CD4-positive, alpha-beta memory T cell (primary cell): ENCODE measurements at regions of chr2 and their contacts with region 1.

Region 1: DNA sequence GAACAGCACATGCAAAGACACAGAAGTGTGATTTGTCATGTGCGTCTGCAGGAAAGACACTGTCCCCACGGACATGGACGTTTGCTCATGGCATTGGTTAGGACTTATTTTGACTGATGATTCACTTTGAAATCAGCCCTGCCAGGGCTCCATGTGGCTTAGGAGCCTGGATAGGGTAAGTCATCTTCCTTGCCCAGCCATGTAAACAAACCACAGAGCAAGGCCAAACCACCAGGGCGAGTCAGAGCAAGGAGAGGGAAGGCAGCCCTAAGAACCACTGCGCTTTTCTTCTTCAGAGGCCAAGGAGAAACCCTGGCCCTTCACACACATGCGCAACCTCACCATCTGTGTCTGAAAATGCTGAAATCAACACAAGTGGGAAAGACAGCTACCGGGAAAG is 88.8 kb downstream of the GFPT1 start:
- DNase-seq: no peak
- H3K4me3 ChIP-seq: no peak overlapping the region
- H3K4me3 Mint-ChIP-seq: no peak overlapping the region
- H3K27ac ChIP-seq: no peak overlapping the region
- H3K27ac Mint-ChIP-seq: no peak overlapping the region
- H3K4me1 ChIP-seq: no peaks in the 10 kb centered on the region
- H3K4me1 Mint-ChIP-seq: no peaks in the 10 kb centered on the region
- H3K27me3 ChIP-seq: no peaks in the 10 kb centered on the region
- H3K27me3 Mint-ChIP-seq: peaks cover 5 to 16% of the 10 kb centered on the region in 2 donors

Region 2: GRCh38 chr2:68027959-68028358 is 1270.3 kb before region 1 on chr2:
- CTCF ChIA-PET with region 1: no interaction called
- POLR2A ChIA-PET with region 1: no interaction called
- intact Hi-C with region 1: loop called (anchors 10 kb)
- DNase-seq: no peak
- H3K4me3 ChIP-seq: no peak overlapping the region
- H3K4me3 Mint-ChIP-seq: no peak overlapping the region
- H3K27ac ChIP-seq: no peak overlapping the region
- H3K27ac Mint-ChIP-seq: no peak overlapping the region
- H3K4me1 ChIP-seq: no peaks in the 10 kb centered on the region
- H3K4me1 Mint-ChIP-seq: no peaks in the 10 kb centered on the region
- H3K27me3 ChIP-seq: no peaks in the 10 kb centered on the region
- H3K27me3 Mint-ChIP-seq: peaks cover 0 to 6% of the 10 kb centered on the region in 2 donors

Region 3: DNA sequence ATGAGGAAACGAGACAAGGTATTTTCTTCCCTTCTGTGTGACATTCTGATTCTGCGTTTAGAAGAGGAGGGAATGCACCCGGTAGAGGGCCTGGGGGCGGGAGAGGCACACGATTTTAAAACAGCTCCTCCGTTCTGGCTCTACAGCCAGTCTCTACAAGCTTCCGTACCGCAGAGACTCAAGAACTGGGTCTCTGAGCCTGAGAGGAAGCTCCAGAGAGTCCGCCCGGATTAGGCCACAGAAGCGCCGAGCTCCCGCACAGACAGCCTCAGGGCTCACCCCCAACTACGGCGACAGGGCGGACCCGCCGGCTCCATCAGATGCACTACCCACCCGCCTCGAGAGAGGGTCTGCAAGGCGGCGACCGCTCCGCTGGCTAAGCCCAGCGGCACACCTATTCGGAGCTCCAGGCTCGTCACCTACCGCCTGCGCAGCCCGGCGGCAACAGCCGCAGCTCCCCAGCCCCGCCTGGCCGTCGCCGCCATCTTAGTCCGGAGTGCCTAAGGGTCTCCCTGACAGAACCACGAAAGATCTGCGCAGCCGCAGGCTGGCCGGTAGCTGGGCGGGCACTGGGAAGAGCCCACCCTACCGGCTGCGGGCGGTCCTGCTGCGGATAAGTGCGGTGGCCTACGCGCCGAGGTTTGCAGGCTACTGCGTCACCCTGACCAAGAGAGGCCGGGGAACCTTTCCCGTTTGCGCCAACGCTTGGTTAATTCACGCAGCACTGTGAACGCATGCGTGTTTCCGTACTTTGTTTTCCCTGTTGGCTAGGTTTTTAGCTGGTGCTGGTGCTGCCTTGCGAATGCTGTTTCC is 138.9 kb after region 1 on chr2 and contains the start of gene NFU1:
- CTCF ChIA-PET with region 1: no interaction called
- POLR2A ChIA-PET with region 1: no interaction called
- intact Hi-C with region 1: no loop called
- DNase-seq: peak; percentile 85 to 91 (median 89)
- H3K4me3 ChIP-seq: peak within 1 kb of the TSS; percentile 75 to 82
- H3K4me3 Mint-ChIP-seq: peak within 1 kb of the TSS; percentile 93 to 99 (median 98)
- H3K27ac ChIP-seq: peak within 1 kb of the TSS; percentile 91
- H3K27ac Mint-ChIP-seq: peak within 1 kb of the TSS; percentile 98 to 100 (median 99)
- H3K4me1 ChIP-seq: peaks cover 32% of the 10 kb centered on the region
- H3K4me1 Mint-ChIP-seq: peaks cover 26 to 48% (median 34%) of the 10 kb centered on the region in 4 donors
- H3K27me3 ChIP-seq: no peaks in the 10 kb centered on the region
- H3K27me3 Mint-ChIP-seq: no peaks in the 10 kb centered on the region
- total RNA-seq, gene NFU1: 23.9 to 27.0 TPM